Caco-2 (cell line): ENCODE measurements at regions of chr17 and their contacts with region 1.

Region 1: GRCh38 chr17:51540151-51540550 is 279.8 kb downstream of the UTP18 start:
- DNase-seq: peak in 1 of 2 experiments; percentile 16
- H3K4me3 ChIP-seq: no peak overlapping the region
- H3K4me3 Mint-ChIP-seq: no peak overlapping the region
- H3K27ac Mint-ChIP-seq: no peak overlapping the region
- H3K4me1 ChIP-seq: no peaks in the 10 kb centered on the region
- H3K4me1 Mint-ChIP-seq: no peaks in the 10 kb centered on the region
- H3K27me3 ChIP-seq: no peaks in the 10 kb centered on the region
- H3K27me3 Mint-ChIP-seq: peaks cover 6% of the 10 kb centered on the region
- CTCF ChIP-seq: peak; percentile 16 to 28

Region 2: GRCh38 chr17:51322390-51323029 is 217.6 kb before region 1 on chr17:
- CTCF ChIA-PET with region 1: no interaction called
- POLR2A ChIA-PET with region 1: no interaction called
- intact Hi-C with region 1: loop called (anchors 5 kb)
- DNase-seq: peak in 1 of 2 experiments; percentile 23
- H3K4me3 ChIP-seq: no peak overlapping the region
- H3K4me3 Mint-ChIP-seq: no peak overlapping the region
- H3K27ac Mint-ChIP-seq: no peak overlapping the region
- H3K4me1 ChIP-seq: peaks cover 18% of the 10 kb centered on the region
- H3K4me1 Mint-ChIP-seq: peaks cover 15% of the 10 kb centered on the region
- H3K27me3 ChIP-seq: no peaks in the 10 kb centered on the region
- H3K27me3 Mint-ChIP-seq: peaks cover 7% of the 10 kb centered on the region
- CTCF ChIP-seq: peak; percentile 0 to 87

Region 3: DNA sequence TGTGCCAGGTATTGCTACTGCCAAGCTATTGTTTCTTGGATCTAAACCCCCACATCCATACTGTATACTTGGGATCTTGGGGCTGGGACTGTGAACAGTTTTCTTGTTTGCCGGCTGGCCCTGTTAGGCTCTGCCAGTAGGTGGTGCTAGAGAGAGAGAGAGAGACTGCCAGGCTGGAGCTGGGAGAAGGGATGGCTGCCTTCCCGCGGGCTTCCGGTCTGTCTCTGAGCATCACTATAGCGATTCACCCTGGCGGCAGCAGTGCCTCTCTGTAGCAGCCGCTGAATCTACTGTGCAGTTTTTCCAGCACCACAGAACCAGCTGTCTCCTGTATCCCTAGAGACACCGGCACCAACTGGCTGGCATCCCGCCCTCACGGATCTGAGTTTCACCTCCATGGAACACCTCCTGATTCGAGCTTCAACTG is 78.6 kb before region 1 on chr17:
- CTCF ChIA-PET with region 1: interaction called, 4 read pairs
- POLR2A ChIA-PET with region 1: no interaction called
- intact Hi-C with region 1: loop called (anchors 1 kb)
- DNase-seq: peak; percentile 74 to 79
- H3K4me3 ChIP-seq: no peak overlapping the region
- H3K4me3 Mint-ChIP-seq: no peak overlapping the region
- H3K27ac Mint-ChIP-seq: no peak overlapping the region
- H3K4me1 ChIP-seq: no peaks in the 10 kb centered on the region
- H3K4me1 Mint-ChIP-seq: no peaks in the 10 kb centered on the region
- H3K27me3 ChIP-seq: no peaks in the 10 kb centered on the region; the same call in 1 of the 2 replicates
- H3K27me3 Mint-ChIP-seq: peaks cover 18% of the 10 kb centered on the region
- CTCF ChIP-seq: peak; percentile 80 to 89

Region 4: DNA sequence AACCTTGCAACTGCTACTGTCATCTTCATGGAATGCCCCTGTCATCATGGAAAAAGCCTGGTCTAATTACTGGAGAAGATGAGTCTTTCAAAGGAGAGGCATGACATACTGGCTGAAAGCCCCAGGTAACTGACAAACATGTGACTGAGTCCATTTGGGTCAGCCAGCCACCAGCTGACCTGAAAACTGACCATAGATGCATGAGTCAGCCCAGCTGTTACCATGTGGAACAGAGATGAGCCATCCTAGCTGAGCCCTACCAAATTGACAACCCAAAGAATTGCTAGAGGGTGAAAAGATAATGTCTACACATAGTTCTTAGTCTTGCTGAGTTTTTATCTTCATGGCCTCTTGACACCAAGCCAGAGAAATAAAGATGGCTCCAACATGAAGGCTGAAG is 32.0 kb after region 1 on chr17:
- CTCF ChIA-PET with region 1: no interaction called
- POLR2A ChIA-PET with region 1: no interaction called
- intact Hi-C with region 1: no loop called
- DNase-seq: no peak
- H3K4me3 ChIP-seq: no peak overlapping the region
- H3K4me3 Mint-ChIP-seq: no peak overlapping the region
- H3K27ac Mint-ChIP-seq: no peak overlapping the region
- H3K4me1 ChIP-seq: no peaks in the 10 kb centered on the region
- H3K4me1 Mint-ChIP-seq: no peaks in the 10 kb centered on the region
- H3K27me3 ChIP-seq: no peaks in the 10 kb centered on the region; the same call in 1 of the 2 replicates
- H3K27me3 Mint-ChIP-seq: peaks cover 14% of the 10 kb centered on the region
- CTCF ChIP-seq: no peak

Region 5: DNA sequence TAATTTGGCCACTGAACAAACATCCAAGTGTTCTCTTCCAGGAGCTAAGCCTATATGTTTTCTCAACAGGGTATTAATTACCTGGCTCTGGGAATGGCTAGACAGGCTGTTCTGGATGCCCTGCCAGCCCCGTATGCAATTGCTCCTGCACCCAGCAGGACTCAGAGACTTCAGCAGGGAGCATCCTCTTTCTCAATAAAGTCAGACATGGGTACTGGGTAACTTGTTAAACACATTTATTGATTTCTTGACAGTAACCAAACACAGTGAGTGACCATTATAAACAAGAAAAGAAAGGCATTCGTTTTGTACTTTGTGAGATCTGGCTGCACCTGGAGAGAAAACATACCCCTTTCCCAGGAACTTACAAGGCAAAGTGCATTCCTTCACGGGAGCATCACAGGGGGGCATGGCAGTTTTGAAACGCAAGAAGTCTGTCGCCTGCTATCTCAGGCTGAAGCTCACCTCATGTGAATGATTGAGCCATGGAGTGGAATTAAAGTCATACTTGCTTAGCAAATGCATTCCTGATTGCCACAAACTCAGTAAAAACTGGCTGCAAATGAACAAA is 90.0 kb after region 1 on chr17:
- CTCF ChIA-PET with region 1: no interaction called
- POLR2A ChIA-PET with region 1: no interaction called
- intact Hi-C with region 1: no loop called
- DNase-seq: no peak
- H3K4me3 ChIP-seq: no peak overlapping the region
- H3K4me3 Mint-ChIP-seq: no peak overlapping the region
- H3K27ac Mint-ChIP-seq: no peak overlapping the region
- H3K4me1 ChIP-seq: no peaks in the 10 kb centered on the region
- H3K4me1 Mint-ChIP-seq: no peaks in the 10 kb centered on the region
- H3K27me3 ChIP-seq: no peaks in the 10 kb centered on the region
- H3K27me3 Mint-ChIP-seq: peaks cover 4% of the 10 kb centered on the region
- CTCF ChIP-seq: no peak